ENCODE measurements at regions of chr15 and their contacts with region 1.

Region 1: DNA sequence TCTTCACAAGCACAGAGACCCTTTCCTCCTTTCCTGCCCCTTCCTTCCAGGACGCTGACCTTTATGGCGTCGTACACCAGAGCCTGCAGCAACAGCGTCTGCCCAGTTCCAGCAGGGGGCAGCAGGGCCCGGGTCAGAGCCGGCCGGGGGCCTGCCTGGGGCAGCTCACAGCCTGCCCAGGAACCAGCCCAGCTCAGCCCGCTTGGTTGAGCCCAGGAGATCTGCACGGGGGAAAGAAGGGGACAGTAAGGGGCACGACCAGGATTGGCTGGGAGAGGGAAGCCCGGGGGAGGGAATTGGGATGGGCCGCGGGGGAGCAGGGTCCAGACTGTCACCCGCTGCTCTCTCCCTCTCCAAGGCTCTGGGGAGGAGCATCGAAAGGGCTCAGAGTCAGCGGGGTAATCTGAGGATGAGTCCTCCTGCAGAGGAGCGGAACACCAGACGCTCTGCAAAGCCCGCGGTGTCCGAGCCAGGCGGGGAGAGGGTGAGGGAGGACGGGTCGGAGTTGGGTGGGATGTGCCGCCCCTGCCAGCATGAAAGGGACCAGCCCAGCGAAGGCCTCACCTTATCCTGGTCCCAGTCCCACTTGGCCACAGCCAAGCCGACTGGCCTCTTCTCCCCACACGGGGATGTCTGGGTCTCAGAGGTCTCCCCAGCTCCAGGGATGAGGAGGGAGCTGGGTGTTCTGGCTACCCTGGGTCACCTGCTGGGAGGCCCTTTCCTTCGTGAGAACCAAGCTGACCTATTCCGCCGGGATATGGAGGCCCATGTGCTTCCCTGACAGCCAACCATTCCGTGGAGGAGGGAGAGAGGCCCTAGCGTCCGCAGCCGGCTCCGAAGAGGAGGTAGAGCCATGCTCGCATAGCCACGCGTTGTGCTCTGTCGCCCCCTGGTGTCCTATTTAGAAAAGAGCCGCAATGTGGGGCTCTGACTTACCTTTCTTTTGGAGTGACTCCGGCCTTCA is 7.4 kb upstream of the IGDCC3 start:
- DNase-seq: peak; percentile 88
- ATAC-seq: peak; percentile 89
- H3K4me3 Mint-ChIP-seq: peak overlapping the region; percentile 73
- H3K27ac Mint-ChIP-seq: peak overlapping the region; percentile 47
- H3K4me1 Mint-ChIP-seq: peaks cover 10% of the 10 kb centered on the region
- H3K27me3 Mint-ChIP-seq: peaks cover 24% of the 10 kb centered on the region

Region 2: DNA sequence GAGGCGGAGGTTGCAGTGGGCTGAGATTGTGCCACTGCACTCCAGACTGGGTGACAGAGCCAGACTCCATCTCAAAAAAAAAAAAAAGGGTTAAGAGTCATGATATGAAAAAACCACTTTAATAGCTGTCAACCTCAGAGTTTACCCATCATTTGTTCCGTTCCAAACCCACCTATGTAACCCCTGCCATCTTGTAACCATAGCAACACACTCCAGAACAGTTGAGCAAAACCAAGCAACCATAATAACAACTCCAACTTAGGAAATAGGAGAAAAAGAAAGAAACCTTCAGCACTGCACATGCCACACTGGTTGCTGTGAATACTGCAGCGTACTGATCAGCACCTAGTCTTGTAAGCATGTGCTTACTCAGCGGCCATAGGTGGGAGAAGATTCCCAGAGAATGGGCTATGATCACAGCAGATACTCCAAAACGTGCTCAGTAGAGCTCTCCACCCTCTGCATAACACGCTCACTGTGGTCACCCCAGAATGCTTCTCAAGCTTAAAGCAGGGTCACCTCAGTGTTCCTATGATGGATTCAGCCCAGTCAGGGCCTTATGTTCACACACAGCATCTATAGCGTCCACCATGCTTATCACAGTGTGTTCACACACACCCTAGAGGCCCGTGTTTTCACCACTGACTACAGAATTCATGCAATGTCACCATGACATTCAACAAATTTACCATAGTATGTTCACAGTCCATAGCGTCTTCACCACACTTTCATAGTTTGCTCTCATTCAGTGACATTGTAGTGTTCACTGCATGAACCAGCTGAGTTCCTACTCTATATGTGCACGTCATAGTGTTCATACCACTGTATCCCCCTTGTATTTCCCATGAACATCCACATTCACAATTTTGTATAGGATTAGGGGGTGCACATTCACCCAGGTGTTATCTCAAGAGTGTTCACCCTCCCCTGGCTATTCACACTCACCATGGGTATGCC is 167.4 kb before region 1 on chr15:
- CTCF ChIA-PET with region 1: no interaction called
- DNase-seq: no peak
- ATAC-seq: no peak
- H3K4me3 Mint-ChIP-seq: no peak overlapping the region
- H3K27ac Mint-ChIP-seq: no peak overlapping the region
- H3K4me1 Mint-ChIP-seq: peaks cover 8% of the 10 kb centered on the region
- H3K27me3 Mint-ChIP-seq: peaks cover 2% of the 10 kb centered on the region

Region 3: DNA sequence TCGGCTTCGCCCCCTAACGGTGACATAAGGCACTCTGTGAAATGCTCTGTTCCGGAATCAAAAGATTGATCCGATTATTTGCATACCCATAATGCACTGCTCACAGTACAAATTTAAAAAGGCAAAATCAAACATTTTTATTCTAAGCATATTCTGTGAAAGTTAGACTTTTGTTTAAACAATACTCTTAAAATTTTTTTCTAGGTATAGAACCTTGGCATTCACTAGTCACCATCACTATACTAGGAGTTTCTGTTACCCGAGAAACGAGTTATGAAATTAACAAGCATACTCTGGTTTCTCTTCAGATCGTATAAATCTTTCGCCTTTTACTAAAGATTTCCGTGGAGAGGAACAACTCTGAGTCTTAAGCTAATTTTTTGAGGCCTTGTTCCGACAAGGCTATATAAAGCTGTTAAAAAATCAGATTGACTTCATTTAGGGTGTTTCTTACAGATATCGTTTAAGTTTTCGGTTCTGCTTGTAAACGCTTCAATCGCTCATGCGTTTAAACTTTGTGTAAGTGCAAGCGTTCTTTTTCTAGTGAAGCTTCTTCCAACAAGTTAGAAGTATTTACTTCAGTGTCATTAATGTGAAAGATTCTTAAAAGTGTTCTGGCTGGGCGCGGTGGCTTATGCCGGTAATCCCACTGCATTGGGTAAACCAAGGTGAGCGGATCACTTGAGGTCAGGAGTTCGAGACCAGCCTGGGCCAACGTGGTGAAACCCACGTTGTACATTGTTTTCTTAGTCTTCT is 80.6 kb before region 1 on chr15 and contains the start of gene RNU5B-1:
- CTCF ChIA-PET with region 1: interaction called, 11 read pairs
- DNase-seq: peak; percentile 90
- ATAC-seq: peak; percentile 74
- H3K4me3 Mint-ChIP-seq: peak within 1 kb of the TSS; percentile 87
- H3K27ac Mint-ChIP-seq: peak within 1 kb of the TSS; percentile 97
- H3K4me1 Mint-ChIP-seq: peaks cover 36% of the 10 kb centered on the region
- H3K27me3 Mint-ChIP-seq: peaks cover 6% of the 10 kb centered on the region
- total RNA-seq, gene RNU5B-1: 15.8 TPM in 1 of 2 experiments, not detected in the other

Region 4: DNA sequence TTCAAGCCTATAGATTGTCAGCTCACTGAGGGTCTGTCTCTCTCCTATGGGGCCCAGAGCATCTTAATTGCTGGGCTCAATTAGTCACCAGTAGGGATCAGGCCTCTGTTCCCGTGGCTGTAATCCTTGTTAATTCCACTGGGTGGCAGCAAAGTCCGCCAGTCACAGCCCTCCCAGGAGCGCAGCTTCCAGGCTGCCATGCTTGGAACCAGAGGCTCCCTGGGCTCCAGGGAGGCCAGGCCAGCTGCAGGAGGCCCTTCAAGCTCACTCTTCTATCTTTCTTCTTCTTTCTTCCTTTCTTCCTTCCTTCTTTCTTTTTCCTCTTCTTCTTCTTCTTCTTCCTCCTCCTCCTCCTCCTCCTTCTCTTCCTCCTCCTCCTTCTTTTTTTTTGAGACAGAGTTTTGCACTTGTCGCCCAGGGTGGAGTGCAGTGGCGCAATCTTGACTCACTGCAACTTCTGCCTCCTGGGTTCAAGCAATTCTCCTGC is 66.3 kb before region 1 on chr15:
- CTCF ChIA-PET with region 1: interaction called, 161 read pairs
- DNase-seq: peak; percentile 84
- ATAC-seq: peak; percentile 96
- H3K4me3 Mint-ChIP-seq: no peak overlapping the region
- H3K27ac Mint-ChIP-seq: no peak overlapping the region
- H3K4me1 Mint-ChIP-seq: no peaks in the 10 kb centered on the region
- H3K27me3 Mint-ChIP-seq: peaks cover 20% of the 10 kb centered on the region